Heart left ventricle (tissue), 16 donors: ENCODE measurements at regions of chr2 and their contacts with region 1.

Region 1: DNA sequence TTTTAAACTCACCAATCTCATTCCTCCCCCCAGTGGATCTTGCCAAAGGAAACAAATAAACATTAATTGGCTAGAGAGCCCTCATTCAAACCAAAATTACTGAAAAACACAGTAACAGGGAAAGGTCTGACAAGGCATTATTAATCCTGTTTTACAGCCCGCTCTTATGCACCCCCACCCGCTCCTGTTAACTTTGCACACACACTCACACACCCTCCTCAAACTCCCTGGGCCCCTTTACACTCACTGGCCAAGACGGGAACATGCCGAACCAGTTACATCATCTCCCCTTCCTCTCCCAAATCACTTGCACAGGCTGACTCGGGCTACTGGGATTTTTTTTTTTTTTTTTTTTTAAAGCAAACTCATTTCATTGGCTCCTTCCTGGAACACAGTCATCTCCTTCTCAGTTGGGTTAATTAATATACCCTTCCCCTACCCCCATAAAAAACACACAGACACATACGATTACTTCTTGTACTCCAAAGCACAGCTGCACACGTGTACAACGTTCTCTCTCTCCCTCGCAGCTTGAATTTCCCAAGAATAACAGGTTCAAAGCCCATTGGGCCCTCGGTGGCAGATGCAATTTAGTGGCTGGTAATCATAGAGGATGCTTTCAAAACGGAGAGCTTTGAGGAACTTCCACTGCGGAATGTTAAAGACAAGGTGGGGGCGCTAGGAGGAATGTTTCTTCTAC is 31.8 kb downstream of the KLF7 start:
- DNase-seq: peak; percentile 64 to 91 (median 85)
- ATAC-seq: peak; percentile 96 to 97 (median 96)
- H3K4me3 ChIP-seq: peak overlapping the region in 7 of 12 donors; percentile 5 to 27 (median 18)
- H3K27ac ChIP-seq: peak overlapping the region; percentile 70 to 92 (median 84)
- H3K4me1 ChIP-seq: peaks cover 35 to 99% (median 88%) of the 10 kb centered on the region in 12 donors
- H3K27me3 ChIP-seq: no peaks in the 10 kb centered on the region
- CTCF ChIP-seq: no peak
- POLR2A ChIP-seq: peak in 1 of 2 donors; percentile 13

Region 2: DNA sequence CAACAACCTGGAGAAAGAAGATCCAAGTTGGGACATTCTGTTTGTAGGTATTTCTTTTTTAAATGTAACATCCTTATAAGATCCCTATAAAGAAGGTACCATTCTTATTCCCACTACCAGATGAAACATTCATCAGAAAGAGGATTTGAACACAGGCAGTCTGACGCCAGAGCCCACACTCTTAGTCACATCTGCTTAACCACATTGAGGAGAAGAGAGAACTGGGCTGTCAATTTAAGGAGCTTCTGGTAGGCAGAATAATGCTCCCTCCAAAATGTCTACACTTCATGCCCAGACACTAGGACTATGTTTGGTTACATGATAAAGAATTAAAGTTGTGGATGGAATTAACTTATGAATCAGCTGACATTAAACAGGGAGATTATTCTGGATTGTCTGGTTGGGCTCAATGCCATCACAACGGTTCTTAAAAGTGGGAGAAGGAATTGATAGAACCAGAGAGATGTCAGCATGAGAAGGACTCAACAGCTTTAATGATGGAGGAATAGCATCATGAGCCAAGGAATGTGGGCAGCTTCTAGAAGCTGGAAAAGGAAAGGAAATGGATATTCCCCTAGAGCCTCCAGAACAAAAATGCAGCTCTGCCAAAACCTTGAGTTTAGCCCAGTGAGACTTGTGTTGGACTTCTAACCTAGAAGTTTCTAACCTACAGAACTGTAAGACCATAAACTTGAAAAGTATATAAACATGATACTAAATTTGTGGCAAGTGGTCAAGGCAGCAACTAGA is 50.4 kb before region 1 on chr2:
- intact Hi-C with region 1: loop called in 1 of 10 experiments (anchors 5 kb)
- DNase-seq: no peak
- ATAC-seq: peak in 2 of 4 donors; percentile 6 to 27
- H3K4me3 ChIP-seq: no peak overlapping the region
- H3K27ac ChIP-seq: peak overlapping the region in 10 of 12 donors; percentile 19 to 57 (median 44)
- H3K4me1 ChIP-seq: peaks cover 7 to 64% (median 50%) of the 10 kb centered on the region in 12 donors
- H3K27me3 ChIP-seq: no peaks in the 10 kb centered on the region
- CTCF ChIP-seq: no peak
- POLR2A ChIP-seq: no peak

Region 3: DNA sequence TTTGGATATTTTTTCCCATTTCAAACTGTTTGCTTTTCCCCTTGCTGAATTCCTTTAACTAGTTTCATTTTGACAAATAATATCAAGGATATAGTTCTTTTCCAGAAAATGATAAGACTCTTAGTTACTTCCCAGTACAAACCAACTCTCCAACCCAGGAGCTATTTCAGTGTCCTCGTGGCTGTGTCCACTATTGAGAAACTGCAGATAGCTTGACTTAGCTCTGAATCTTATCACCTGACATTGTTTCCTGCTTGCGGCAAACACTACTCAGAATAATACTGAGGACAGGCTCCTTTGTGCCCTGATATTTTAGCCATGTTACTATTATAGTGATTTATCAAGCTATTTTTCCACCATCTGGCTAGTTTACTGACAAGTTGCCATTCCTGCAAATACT is 42.8 kb before region 1 on chr2:
- intact Hi-C with region 1: loop called in 6 of 10 experiments (anchors 5 kb)
- DNase-seq: peak in 1 of 5 donors; percentile 36
- ATAC-seq: peak; percentile 75 to 87 (median 85)
- H3K4me3 ChIP-seq: no peak overlapping the region
- H3K27ac ChIP-seq: peak overlapping the region; percentile 61 to 89 (median 74)
- H3K4me1 ChIP-seq: peaks cover 30 to 100% (median 88%) of the 10 kb centered on the region in 12 donors
- H3K27me3 ChIP-seq: no peaks in the 10 kb centered on the region
- CTCF ChIP-seq: no peak
- POLR2A ChIP-seq: no peak

Region 4: DNA sequence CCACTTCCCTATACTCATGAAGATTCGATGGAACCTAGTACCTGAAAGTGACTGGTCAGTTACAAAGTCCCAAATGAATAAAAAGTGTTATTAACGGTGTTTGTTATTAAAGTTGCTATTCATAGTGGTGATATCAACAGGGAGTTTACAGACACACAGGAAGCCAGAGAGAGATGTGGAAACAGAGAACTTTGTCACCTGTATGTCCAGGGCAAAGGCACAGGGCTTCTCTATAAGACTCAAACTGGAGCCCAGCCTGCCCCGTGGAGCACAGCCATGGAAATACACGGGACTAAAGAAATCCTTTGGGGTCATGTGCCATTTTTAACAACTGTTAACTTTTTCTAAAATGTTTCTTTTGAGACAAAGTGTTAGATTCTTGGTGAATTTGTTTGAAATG is 36.7 kb before region 1 on chr2:
- intact Hi-C with region 1: loop called in 5 of 10 experiments (anchors 5 kb)
- DNase-seq: no peak
- ATAC-seq: peak; percentile 31 to 68 (median 44)
- H3K4me3 ChIP-seq: no peak overlapping the region
- H3K27ac ChIP-seq: peak overlapping the region in 11 of 12 donors; percentile 2 to 73 (median 45)
- H3K4me1 ChIP-seq: peaks cover 21 to 71% (median 45%) of the 10 kb centered on the region in 12 donors
- H3K27me3 ChIP-seq: no peaks in the 10 kb centered on the region
- CTCF ChIP-seq: no peak
- POLR2A ChIP-seq: no peak